GM10248 (cell line): ENCODE measurements at regions of chr4 and their contacts with region 1.

Region 1: DNA sequence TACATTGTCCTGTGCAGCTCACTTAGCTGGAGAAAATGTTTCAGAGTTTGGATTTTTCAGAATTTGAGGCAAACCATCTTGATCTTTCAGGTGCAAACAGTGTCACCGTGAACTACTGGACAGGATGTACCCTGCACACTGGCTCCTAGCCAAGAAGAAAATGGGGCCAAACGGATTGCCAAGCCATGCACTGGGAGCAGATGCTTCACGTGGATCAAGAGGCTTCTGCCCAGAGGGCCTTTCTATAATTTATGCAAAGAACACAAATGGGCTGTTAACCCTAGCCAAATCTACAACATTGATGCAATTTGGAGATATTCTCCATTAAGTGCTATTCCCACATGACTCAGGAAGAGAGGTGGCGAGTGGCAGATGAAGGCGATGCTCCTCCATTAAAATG is 46.9 kb upstream of the ATP8A1 start:
- DNase-seq: no peak
- CTCF ChIP-seq: no peak

Region 2: DNA sequence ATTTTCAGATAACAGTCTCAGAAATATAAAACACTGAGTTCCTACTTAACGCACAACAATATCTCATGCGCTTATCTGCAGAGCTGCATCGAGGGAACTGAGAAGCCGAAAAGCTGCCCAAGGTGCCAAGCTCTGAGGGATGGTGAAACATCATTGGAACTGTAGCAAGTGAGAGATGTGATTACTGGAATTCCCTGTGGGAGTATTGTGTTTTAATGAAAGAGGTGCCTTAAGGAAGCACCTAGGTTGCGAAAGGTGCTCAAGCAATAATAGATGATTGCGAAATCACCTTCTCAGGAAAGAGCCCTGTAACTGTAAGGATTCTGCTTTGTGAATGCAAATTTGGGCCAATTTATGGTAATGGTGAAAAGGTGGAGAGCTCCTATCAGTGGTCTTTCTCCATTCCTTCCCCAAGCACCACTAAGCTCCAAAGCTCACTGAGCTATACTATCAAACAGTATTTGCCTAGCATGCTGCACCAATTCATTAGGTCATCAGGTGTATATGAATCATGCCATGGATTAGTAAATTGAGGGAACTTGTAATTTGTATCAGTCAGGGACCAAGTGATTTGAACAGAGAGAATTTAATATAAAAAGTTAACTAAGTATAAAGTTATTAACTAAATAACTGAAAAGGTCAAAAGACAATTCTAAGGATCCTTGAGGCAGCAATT is 12.1 kb after region 1 on chr4:
- CTCF ChIA-PET with region 1: interaction called, 13 read pairs
- POLR2A ChIA-PET with region 1: no interaction called
- DNase-seq: no peak
- CTCF ChIP-seq: no peak